ENCODE measurements at regions of chr12 and their contacts with region 1.

Region 1: GRCh38 chr12:108187831-108188230 is 58.7 kb downstream of the WSCD2 start:
- DNase-seq: no peak

Region 2: DNA sequence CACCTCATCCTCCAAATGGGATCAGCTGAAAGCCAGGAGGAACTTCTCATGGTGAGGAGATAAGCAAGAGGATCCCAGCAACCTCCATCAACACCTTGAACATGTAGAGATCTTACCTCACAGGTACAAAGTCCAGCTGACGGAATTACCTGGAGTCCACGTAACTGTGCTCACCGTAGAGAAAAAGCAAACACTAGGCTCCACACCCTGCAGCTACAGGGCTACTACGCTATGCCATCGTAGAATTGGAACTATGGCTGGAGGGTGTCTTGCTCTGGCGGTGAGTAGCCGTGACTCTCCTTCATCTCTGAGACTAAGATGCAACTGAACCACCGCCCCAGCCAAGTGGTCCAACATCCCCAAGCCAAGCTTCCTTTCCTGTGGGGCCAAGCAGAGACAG is 1145.0 kb before region 1 on chr12:
- intact Hi-C with region 1: loop called in 1 of 2 experiments (anchors 5 kb)
- DNase-seq: no peak